Activated CD4-positive, alpha-beta memory T cell treated with anti-CD3 and anti-CD28 coated beads for 36 hours (primary cell): ENCODE measurements at regions of chr19 and their contacts with region 1.

Region 1: DNA sequence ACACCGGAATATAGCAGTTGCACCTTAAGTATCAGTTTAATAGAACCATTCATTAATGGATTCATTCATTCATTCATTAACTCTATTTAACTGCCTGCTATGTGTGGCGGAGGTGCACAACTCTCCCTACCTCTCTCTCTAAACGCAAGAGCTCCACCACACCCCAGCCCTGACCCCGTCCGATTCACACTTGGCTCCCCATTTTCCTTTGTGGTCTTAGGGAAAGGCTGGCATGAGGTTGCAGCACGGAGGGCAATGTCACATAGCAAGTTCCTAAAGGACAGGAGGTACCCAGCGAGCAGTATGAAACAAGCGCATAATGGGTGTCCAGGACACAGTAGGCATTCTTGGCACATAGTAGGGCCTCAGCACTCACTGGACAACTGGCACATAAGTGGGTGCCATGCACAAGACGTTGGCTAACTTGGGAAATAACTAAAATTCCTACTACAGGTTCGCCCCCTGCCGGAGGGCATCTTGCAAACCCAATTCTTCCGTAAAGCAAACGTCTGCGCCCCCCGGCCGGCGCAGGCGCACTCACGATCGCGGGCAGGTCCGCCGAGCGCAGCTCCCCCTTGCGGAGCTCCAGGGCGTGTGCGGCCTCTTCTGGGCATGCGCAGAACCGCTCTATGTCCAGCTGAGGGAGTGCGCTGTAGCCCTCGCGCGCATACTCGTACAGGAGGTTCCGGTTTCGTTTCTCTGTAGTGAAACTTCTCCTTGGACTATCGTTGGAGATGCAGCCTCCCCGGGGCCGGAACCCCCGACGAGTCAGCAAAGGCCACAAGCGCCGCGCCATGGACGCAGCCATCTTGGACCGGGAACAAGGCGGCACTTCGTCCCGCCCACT is at the start of gene SARS2:
- DNase-seq: peak; percentile 95
- H3K4me3 Mint-ChIP-seq: peak within 1 kb of the TSS; percentile 94
- H3K27ac Mint-ChIP-seq: peak within 1 kb of the TSS; percentile 96
- H3K4me1 Mint-ChIP-seq: peaks cover 34% of the 10 kb centered on the region
- H3K27me3 Mint-ChIP-seq: no peaks in the 10 kb centered on the region
- total RNA-seq, gene SARS2: 33.7 to 39.6 TPM

Region 2: GRCh38 chr19:38514812-38515633 is 415.1 kb before region 1 on chr19:
- CTCF ChIA-PET with region 1: interaction called, 9 read pairs
- POLR2A ChIA-PET with region 1: no interaction called
- intact Hi-C with region 1: loop called (anchors 5 kb)
- DNase-seq: peak; percentile 86
- H3K4me3 Mint-ChIP-seq: no peak overlapping the region
- H3K27ac Mint-ChIP-seq: peak overlapping the region; percentile 33
- H3K4me1 Mint-ChIP-seq: peaks cover 22% of the 10 kb centered on the region
- H3K27me3 Mint-ChIP-seq: no peaks in the 10 kb centered on the region

Region 3: GRCh38 chr19:38634757-38635482 is 295.2 kb before region 1 on chr19:
- CTCF ChIA-PET with region 1: interaction called, 11 read pairs
- POLR2A ChIA-PET with region 1: no interaction called
- intact Hi-C with region 1: no loop called
- DNase-seq: peak; percentile 83
- H3K4me3 Mint-ChIP-seq: no peak overlapping the region
- H3K27ac Mint-ChIP-seq: peak overlapping the region; percentile 81
- H3K4me1 Mint-ChIP-seq: peaks cover 30% of the 10 kb centered on the region
- H3K27me3 Mint-ChIP-seq: no peaks in the 10 kb centered on the region

Region 4: DNA sequence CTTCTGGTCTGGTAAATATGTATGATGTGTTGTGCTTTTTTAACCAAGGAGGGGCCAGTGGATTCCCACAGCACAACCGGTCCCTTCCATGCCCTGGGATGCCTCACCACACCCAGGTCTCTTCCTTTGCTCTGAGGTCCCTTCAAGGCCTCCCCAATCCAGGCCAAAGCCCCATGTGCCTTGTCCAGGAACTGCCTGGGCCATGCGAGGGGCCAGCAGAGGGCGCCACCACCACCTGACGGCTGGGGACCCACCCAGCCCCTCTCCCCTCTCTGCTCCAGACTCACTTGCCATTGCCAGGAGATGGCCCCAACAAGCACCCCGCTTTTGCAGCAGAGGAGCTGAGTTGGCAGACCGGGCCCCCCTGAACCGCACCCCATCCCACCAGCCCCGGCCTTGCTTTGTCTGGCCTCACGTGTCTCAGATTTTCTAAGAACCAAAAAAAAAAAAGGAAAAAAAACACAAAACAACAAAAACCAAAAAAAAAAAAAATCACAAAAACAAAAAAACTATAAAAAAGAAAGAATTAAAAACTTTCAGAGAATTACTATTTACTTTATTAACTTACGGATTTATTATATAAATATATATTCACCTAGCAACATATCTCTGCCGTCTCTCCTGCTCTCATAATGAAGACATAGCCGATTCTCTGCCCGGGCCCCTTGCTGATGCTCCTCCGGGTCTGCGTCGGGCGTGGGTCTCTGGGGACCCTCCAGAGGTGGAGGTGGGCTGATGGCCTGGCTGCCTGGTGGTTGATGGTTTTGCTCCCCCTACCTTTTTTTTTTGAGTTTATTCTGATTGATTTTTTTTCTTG is 200.3 kb before region 1 on chr19:
- CTCF ChIA-PET with region 1: interaction called, 16 read pairs
- POLR2A ChIA-PET with region 1: interaction called, 3 read pairs
- intact Hi-C with region 1: loop called (anchors 1 kb)
- DNase-seq: peak; percentile 86
- H3K4me3 Mint-ChIP-seq: no peak overlapping the region
- H3K27ac Mint-ChIP-seq: peak overlapping the region; percentile 57
- H3K4me1 Mint-ChIP-seq: peaks cover 28% of the 10 kb centered on the region
- H3K27me3 Mint-ChIP-seq: no peaks in the 10 kb centered on the region

Region 5: DNA sequence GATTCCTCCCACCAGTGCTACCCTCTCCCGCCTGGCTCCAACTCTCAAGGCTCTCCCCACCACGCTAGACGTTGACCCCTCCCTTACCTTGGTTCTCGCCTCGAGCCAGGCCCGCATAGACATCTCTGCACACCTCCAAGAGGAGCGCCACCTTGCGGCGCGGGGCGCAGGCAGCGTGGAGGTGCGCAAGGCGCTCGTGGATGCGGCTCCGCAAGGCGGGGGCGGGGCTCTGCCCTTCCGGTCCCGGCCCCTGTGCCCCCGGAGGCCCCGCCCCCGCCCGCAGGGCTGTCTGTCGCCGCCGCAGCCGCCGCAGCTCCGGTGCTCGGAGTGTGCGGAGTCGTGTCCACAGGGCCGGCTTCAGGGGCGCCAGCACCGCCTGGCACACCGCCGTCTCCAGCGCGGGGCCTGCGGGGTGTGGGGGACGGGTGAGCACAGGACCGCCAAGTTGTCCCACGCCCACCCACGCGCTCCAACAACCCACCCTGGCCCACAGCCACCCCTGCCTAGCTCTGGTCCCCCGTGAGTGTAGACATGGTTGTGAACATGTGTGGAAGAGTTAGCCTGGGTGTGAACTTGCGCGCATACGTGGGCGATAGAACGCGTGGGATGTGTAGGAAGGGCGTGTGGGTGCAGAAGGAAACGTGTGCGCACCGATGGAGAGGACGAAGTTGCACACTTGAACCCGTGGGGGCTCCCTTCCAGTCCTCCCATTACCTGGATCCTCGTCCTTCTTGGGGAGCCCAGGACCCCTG is 60.1 kb before region 1 on chr19:
- CTCF ChIA-PET with region 1: interaction called, 17 read pairs
- POLR2A ChIA-PET with region 1: interaction called, 3 read pairs
- intact Hi-C with region 1: no loop called
- DNase-seq: peak; percentile 94
- H3K4me3 Mint-ChIP-seq: peak overlapping the region; percentile 76
- H3K27ac Mint-ChIP-seq: peak overlapping the region; percentile 79
- H3K4me1 Mint-ChIP-seq: peaks cover 40% of the 10 kb centered on the region
- H3K27me3 Mint-ChIP-seq: no peaks in the 10 kb centered on the region

Region 6: DNA sequence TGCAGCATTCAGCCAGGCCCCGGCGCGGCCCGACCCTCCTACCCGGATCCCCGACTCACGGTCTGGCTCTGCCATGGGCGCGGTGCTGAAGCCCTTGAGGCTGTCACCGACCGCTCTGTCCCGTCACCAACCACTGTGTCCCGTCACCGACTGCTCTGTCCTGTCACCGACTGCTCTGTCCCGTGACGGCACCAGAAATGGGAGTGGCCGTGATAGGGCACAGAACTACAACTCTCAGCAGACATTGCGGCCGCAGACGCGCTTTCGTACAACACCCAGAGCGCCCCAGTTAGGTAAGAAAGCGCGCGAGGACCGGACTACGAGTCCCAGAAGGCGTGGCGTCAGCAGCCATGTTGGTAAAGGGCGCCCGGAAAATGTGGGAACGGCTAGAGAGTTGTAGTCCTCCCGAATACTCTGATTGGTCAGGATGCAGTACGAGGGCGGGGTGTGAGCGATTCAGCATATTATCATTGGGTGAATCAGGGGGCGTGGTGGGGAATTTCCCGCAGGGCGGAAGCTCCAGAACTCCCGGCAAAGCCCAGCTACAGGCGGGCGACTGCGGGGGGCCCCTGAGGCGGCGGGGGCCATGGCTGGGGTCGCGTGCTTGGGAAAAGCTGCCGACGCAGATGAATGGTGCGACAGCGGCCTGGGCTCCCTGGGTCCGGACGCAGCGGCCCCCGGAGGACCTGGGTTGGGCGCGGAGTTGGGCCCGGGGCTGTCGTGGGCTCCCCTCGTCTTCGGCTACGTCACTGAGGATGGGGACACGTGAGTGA is 30.5 kb before region 1 on chr19 and contains the starts of genes NFKBIB and SIRT2:
- CTCF ChIA-PET with region 1: interaction called, 56 read pairs
- POLR2A ChIA-PET with region 1: interaction called, 6 read pairs
- intact Hi-C with region 1: loop called (anchors 1 kb)
- DNase-seq: peak; percentile 100
- H3K4me3 Mint-ChIP-seq: peak within 1 kb of the TSS; percentile 95
- H3K27ac Mint-ChIP-seq: peak within 1 kb of the TSS; percentile 87
- H3K4me1 Mint-ChIP-seq: peaks cover 33% of the 10 kb centered on the region
- H3K27me3 Mint-ChIP-seq: no peaks in the 10 kb centered on the region
- total RNA-seq, gene NFKBIB: 49.6 to 53.4 TPM
- total RNA-seq, gene SIRT2: 23.5 to 24.6 TPM

Region 7: GRCh38 chr19:38956264-38956663 is 26.1 kb after region 1 on chr19:
- CTCF ChIA-PET with region 1: interaction called, 10 read pairs
- POLR2A ChIA-PET with region 1: no interaction called
- intact Hi-C with region 1: no loop called
- DNase-seq: no peak
- H3K4me3 Mint-ChIP-seq: no peak overlapping the region
- H3K27ac Mint-ChIP-seq: no peak overlapping the region
- H3K4me1 Mint-ChIP-seq: peaks cover 5% of the 10 kb centered on the region
- H3K27me3 Mint-ChIP-seq: peaks cover 15% of the 10 kb centered on the region

Region 8: GRCh38 chr19:39223681-39224279 is 293.6 kb after region 1 on chr19:
- CTCF ChIA-PET with region 1: no interaction called
- POLR2A ChIA-PET with region 1: no interaction called
- intact Hi-C with region 1: no loop called
- DNase-seq: peak; percentile 33
- H3K4me3 Mint-ChIP-seq: no peak overlapping the region
- H3K27ac Mint-ChIP-seq: no peak overlapping the region
- H3K4me1 Mint-ChIP-seq: no peaks in the 10 kb centered on the region
- H3K27me3 Mint-ChIP-seq: peaks cover 18% of the 10 kb centered on the region